ENCODE measurements at regions of chr6 and their contacts with region 1.

Region 1: DNA sequence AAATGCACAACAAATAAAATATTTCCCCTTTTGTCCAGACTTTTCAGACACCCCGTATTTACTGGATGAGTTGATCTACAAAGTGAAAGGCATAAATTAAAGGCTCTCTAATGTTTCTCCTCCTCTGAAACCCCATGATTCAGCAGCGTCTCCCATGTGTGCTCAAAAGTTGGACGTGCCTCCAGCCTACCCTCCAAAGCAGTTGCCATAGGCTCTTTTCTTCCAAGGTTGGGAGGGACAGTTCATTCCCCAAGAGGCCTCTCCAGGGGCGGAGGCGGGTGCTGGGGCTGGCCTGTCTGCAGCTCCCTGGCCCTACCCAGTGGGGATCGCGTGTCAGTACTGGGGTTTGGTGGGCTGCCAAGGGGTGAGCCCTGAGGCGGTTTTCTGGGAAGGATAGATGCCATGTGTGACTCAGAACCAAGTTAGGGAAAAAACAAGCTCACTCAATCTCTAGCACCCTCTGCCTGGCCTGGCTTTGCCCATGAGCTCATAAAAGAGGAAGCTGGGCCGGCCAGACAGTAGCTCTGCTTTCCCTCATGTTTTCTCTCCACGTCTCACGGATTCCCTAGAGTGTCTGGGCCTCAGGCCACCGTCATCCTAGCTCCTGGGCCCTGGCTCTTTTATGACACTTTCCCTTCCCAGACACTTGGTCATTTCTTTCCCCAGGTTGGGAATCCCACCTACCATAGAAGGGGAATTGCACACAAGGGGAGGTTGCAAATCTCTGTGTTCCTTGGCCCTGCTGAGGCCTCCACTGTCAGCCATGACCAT is 8.0 kb upstream of the IER3 start:
- DNase-seq: peak; percentile 99
- H3K4me3 ChIP-seq: no peak overlapping the region
- H3K27ac ChIP-seq: peak overlapping the region; percentile 96
- H3K4me1 ChIP-seq: peaks cover 54% of the 10 kb centered on the region
- H3K27me3 ChIP-seq: no peaks in the 10 kb centered on the region
- CTCF ChIP-seq: peak in 1 of 2 donors; percentile 9
- POLR2A ChIP-seq: peak; percentile 51

Region 2: DNA sequence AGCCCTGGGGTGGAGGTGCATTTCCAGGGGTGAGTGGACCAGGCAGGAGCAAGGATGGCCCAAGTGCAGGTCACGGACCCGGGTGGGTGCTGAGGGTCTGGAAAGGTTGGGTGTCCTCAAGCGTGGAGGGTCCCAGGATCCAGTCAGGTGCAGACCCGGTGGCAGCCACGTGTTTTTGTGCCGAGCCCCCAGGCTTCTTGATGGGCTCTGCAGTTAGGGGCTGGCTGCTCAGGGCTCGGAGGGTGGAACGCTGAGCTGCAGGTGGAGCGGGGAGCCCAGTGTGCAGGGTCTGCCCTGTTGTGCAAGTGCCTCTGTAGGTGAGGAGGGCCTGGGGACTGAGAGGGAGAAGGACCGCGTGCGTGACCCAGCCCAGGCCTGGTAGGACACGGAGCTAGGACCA is 333.9 kb before region 1 on chr6:
- CTCF ChIA-PET with region 1: no interaction called
- POLR2A ChIA-PET with region 1: no interaction called
- dilution Hi-C with region 1: no loop called
- intact Hi-C with region 1: no loop called
- DNase-seq: no peak
- H3K4me3 ChIP-seq: no peak overlapping the region
- H3K27ac ChIP-seq: no peak overlapping the region
- H3K4me1 ChIP-seq: no peaks in the 10 kb centered on the region
- H3K27me3 ChIP-seq: peaks cover 17 to 25% of the 10 kb centered on the region in 2 experiments
- CTCF ChIP-seq: no peak
- POLR2A ChIP-seq: no peak

Region 3: DNA sequence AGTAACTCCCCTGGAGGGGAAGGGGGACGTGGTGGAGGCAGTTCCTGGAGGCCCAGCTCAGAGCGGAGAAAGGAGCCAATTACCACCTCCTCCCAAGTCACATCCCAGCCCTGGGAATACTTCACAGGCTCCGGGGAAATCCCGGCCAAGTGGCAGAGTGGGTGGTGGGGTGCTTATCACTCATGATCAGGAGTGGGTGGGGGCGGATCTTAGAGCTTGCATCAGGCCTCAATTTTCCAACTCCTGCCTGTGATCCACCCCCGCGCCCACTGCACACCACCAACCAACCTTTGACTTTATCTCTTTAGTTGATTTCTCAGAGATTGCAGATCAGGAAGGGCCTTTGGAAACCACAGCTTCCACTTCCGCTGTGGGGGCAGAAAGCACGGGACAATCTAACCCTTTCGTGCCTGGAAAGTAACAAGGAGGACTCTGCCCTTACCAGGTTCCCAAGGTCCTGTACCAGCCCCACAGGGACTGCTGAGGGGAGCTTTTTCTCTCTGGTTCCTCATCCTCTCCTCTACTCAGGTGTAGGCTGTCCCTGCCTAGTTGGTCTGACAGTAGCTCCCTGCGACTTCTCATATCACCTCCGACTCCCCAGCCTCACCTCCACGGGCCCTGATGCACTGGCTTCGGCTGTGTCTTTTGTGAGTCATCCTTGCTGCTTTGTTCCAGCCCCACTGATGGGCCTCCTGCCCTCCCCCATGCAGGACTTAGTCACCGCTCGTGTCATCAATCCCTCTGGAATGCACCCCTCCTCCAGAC is 16.9 kb after region 1 on chr6:
- CTCF ChIA-PET with region 1: interaction called, 14 read pairs
- POLR2A ChIA-PET with region 1: interaction called, 9 read pairs
- dilution Hi-C with region 1: no loop called
- intact Hi-C with region 1: loop called (anchors 1 kb)
- DNase-seq: peak; percentile 94
- H3K4me3 ChIP-seq: peak overlapping the region in 1 of 3 experiments; percentile 35
- H3K27ac ChIP-seq: peak overlapping the region; percentile 96
- H3K4me1 ChIP-seq: peaks cover 29% of the 10 kb centered on the region
- H3K27me3 ChIP-seq: no peaks in the 10 kb centered on the region
- CTCF ChIP-seq: no peak
- POLR2A ChIP-seq: peak; percentile 63

Region 4: DNA sequence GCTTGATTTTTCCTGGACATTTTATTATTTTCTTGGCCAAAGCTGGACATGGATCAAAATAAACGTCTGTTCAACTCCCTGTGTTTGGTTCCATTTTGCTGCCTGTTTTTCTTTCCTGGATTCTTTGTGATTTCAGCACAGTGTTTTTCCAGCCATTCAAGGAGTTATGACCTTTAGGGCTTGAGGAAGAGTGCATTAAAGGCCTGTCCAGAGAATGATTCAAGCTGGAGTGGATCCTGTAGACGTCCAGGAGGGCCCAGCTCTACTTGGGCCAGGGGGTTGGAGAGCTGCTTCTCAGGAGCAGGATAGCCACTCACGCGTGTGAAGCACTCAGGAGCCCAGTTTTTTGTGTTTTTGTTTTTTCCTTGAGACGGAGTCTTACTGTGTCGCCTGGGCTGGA is 48.5 kb after region 1 on chr6:
- CTCF ChIA-PET with region 1: no interaction called
- POLR2A ChIA-PET with region 1: interaction called, 3 read pairs
- dilution Hi-C with region 1: no loop called
- intact Hi-C with region 1: loop called (anchors 2 kb)
- DNase-seq: peak; percentile 98
- H3K4me3 ChIP-seq: no peak overlapping the region
- H3K27ac ChIP-seq: peak overlapping the region; percentile 61
- H3K4me1 ChIP-seq: peaks cover 22% of the 10 kb centered on the region
- H3K27me3 ChIP-seq: no peaks in the 10 kb centered on the region
- CTCF ChIP-seq: no peak
- POLR2A ChIP-seq: peak; percentile 37

Region 5: GRCh38 chr6:30814136-30815040 is 62.0 kb after region 1 on chr6:
- CTCF ChIA-PET with region 1: interaction called, 6 read pairs
- POLR2A ChIA-PET with region 1: no interaction called
- dilution Hi-C with region 1: no loop called
- intact Hi-C with region 1: loop called (anchors 1 kb)
- DNase-seq: peak; percentile 92
- H3K4me3 ChIP-seq: no peak overlapping the region
- H3K27ac ChIP-seq: peak overlapping the region; percentile 93
- H3K4me1 ChIP-seq: peaks cover 37% of the 10 kb centered on the region
- H3K27me3 ChIP-seq: no peaks in the 10 kb centered on the region
- CTCF ChIP-seq: no peak
- POLR2A ChIP-seq: no peak

Measured in endothelial cell of umbilical vein (primary cell).